A549 (cell line): ENCODE measurements at regions of chr6 and their contacts with region 1.

Region 1: DNA sequence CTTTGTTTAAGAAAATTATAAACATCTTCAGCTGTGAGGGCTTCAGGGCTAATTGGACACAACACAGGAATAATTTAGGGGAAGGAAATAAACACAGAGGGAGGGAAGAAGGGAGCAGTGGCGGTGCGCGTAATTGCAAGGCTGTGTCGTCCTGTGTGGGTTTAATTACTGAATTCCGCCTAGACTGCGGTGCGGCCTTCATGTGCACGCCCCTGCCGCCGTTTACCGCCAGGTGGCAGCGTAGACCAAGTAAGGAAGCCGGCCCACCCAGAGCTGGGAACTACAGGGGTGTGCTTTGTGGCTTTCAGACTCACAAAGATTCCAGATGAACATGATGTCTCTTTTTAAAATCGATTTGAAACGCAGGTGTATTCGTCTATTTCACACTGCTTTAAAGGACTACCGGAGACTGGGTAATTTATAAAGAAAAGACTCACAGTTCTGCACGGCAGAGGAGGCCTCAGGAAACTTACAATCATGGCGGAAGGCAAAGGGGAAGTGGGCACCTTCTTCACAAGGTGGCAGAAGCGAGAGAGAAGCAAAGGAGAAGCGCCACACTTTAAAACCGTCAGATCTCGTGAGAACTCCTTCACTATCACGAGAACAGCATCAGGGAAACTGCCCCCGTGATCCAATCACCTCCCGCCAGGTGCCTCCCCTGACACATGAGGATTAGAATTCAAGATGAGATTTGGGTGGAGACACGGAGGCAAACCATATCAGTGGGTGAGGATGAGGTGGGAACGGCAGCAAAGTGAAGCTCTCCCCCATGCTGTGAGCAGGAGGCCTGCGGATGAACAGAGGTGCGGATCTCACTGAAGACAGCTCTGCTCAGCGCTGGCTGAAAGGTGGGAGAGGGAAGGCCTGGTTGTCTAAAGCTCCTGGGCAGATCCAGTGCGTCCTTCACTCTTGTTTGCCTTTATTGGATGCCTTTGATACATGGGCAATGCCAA is 222.0 kb upstream of the PDE10A start:
- DNase-seq: peak; percentile 52 to 69
- ATAC-seq: peak; percentile 87
- H3K4me3 ChIP-seq: no peak overlapping the region
- H3K27ac ChIP-seq: peak overlapping the region; percentile 5 to 49; a peak in 2 of 6 replicates
- H3K4me1 ChIP-seq: peaks cover 12% of the 10 kb centered on the region; the same call in 2 of the 3 replicates
- CTCF ChIP-seq: peak; percentile 64
- EP300 ChIP-seq: no peak
- POLR2A ChIP-seq: no peak
- RAD21 ChIP-seq: peak; percentile 80

Region 2: GRCh38 chr6:165872311-165872710 is 12.8 kb before region 1 on chr6:
- CTCF ChIA-PET with region 1: interaction called, 10 read pairs
- POLR2A ChIA-PET with region 1: no interaction called
- DNase-seq: no peak
- ATAC-seq: peak in 1 of 2 experiments; percentile 46; a peak in 2 of 6 replicates
- H3K4me3 ChIP-seq: no peak overlapping the region
- H3K27ac ChIP-seq: no peak overlapping the region
- H3K4me1 ChIP-seq: no peaks in the 10 kb centered on the region
- CTCF ChIP-seq: no peak
- EP300 ChIP-seq: no peak
- POLR2A ChIP-seq: no peak
- RAD21 ChIP-seq: no peak

Region 3: GRCh38 chr6:166106076-166106686 is 221.1 kb after region 1 on chr6:
- CTCF ChIA-PET with region 1: interaction called, 33 read pairs
- POLR2A ChIA-PET with region 1: no interaction called
- DNase-seq: peak; percentile 47 to 72
- ATAC-seq: peak; percentile 78 to 89
- H3K4me3 ChIP-seq: no peak overlapping the region
- H3K27ac ChIP-seq: peak overlapping the region; percentile 45 to 63; a peak in 5 of 6 replicates
- H3K4me1 ChIP-seq: peaks cover 10% of the 10 kb centered on the region; the same call in 1 of the 3 replicates
- CTCF ChIP-seq: peak; percentile 85
- EP300 ChIP-seq: no peak
- POLR2A ChIP-seq: no peak
- RAD21 ChIP-seq: peak; percentile 94 to 98